ENCODE measurements at regions of chr15 and their contacts with region 1.

Region 1: DNA sequence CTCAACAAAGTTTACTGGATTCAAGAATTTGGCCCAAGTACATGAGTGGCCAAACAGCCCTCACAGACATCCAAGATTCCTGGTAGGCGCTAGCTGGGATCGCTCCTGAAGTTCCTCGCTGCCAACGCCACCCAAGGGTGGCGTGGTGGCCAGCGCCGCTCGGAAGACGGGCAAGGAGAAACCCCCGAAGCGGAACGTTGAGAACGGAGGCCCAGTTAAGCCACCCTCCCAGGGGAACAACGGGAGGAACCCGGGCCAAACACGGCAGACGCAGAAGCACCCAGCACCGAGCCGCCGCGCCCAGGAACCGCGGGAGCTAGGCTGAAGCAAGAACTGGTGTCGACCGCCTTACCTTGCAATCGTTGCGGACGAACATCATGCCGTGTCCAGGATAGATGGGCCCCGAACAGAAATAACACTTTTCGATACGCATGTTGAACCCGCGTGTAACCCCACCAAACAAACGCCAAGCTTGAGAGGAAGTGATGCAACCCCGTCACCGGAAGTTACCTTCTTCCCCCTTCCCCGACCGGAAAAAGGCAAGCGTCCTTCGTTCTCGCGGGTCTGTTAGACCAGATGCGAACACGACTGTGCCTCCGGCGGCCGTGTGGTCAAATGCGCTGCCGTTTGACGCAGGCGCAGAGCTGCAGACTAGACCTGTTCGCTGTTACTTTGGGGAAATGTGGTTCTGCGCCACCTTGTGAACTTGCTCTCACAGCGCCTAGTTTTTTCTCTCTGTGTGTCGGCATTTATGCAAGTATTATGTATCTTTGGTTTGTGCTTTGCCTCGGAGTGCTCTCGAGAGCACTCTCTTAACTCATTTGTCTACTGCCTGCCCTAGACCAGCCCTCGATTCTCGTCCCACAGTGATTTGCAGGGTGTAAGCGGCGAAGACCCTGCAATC is at the start of gene RSL24D1:
- DNase-seq: peak; percentile 94
- H3K4me3 Mint-ChIP-seq: no peak within 1 kb of the TSS
- H3K27ac Mint-ChIP-seq: no peak within 1 kb of the TSS
- H3K4me1 Mint-ChIP-seq: peaks cover under 1% of the 10 kb centered on the region
- H3K27me3 Mint-ChIP-seq: no peaks in the 10 kb centered on the region
- total RNA-seq, gene RSL24D1: 111 and 116 TPM in 2 replicates

Region 2: DNA sequence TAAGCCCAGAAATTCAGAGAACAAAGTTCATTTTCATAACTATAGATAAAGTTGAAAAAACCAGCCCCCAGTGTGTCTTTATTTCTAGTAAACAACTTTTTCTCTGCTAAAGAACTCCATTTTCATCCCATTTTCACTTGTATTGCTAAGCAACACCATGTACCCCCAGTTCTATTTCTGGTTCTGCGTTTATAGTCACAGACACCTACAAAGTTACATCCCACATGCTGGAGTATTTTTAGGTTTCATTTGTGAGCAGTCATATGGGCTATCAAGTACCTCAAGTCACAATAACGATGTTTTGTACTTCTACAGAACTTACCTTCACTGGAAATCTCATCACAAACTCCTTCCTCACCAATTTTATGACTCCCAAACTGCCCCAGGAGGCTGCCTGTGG is 236.4 kb before region 1 on chr15:
- intact Hi-C with region 1: no loop called
- DNase-seq: no peak
- H3K4me3 Mint-ChIP-seq: no peak overlapping the region
- H3K27ac Mint-ChIP-seq: no peak overlapping the region
- H3K4me1 Mint-ChIP-seq: no peaks in the 10 kb centered on the region
- H3K27me3 Mint-ChIP-seq: no peaks in the 10 kb centered on the region

Region 3: DNA sequence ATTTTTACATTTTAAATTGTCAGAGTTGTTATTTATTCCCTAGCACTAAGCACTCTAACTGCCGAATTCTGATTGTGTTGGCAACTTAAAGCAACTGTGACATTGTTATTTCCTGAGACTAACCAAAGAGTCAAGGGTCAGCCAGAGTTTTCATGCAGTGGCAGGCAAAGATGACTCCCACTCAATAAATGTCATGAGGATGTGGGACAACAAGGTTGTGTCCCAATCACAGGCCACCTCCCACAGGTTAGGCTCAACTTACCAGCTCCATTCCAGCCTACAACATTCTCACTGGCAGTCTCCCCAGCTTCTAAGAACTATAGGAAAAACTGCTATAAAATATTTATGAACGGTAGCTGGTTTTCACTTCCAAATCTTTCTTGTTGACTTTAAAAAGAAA is 80.1 kb before region 1 on chr15:
- intact Hi-C with region 1: no loop called
- DNase-seq: no peak
- H3K4me3 Mint-ChIP-seq: no peak overlapping the region
- H3K27ac Mint-ChIP-seq: no peak overlapping the region
- H3K4me1 Mint-ChIP-seq: no peaks in the 10 kb centered on the region
- H3K27me3 Mint-ChIP-seq: no peaks in the 10 kb centered on the region

Region 4: DNA sequence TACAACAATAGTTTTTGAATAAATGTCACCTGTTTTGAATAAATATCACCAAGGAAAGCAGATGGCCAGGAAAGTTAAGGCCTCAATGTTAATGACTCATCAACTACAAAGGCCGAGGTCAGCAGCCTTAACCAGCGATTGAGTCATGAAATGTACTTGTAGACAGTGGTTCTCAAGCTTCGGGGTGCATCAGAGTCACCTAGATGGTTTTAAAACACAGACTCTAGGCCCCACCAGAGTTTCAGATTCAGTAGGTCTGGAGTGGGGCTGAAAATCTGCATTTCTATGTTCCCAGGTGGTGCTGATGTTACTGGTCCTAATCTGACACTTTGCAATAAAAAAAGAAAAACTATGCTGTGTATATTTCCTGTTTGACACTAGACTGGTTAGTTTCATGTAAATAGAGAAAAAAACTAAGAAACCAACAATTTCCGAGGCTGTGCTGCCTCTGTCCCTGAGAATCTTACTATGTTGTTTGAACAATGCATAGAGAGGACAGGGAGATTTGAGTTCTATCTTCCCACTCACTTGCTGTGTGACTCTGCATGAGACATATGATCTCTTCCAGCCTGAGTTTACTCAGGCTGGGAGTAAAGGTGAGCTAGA is 83.1 kb after region 1 on chr15:
- intact Hi-C with region 1: loop called (anchors 1 kb)
- DNase-seq: peak; percentile 47
- H3K4me3 Mint-ChIP-seq: peak overlapping the region; percentile 57
- H3K27ac Mint-ChIP-seq: peak overlapping the region; percentile 99
- H3K4me1 Mint-ChIP-seq: peaks cover 92% of the 10 kb centered on the region
- H3K27me3 Mint-ChIP-seq: no peaks in the 10 kb centered on the region

Region 5: GRCh38 chr15:55318588-55319494 is 122.1 kb after region 1 on chr15 and contains the starts of genes PIGB and PIGBOS1:
- intact Hi-C with region 1: loop called (anchors 1 kb)
- DNase-seq: peak; percentile 78
- H3K4me3 Mint-ChIP-seq: peak within 1 kb of the TSS; percentile 100
- H3K27ac Mint-ChIP-seq: peak within 1 kb of the TSS; percentile 99
- H3K4me1 Mint-ChIP-seq: peaks cover 63% of the 10 kb centered on the region
- H3K27me3 Mint-ChIP-seq: no peaks in the 10 kb centered on the region
- total RNA-seq, gene PIGB: 14.0 and 19.9 TPM in 2 replicates
- total RNA-seq, gene PIGBOS1: 10.3 and 11.8 TPM in 2 replicates

Region 6: GRCh38 chr15:55434989-55435825 is 238.5 kb after region 1 on chr15:
- intact Hi-C with region 1: loop called (anchors 5 kb)
- DNase-seq: peak; percentile 1
- H3K4me3 Mint-ChIP-seq: no peak overlapping the region
- H3K27ac Mint-ChIP-seq: no peak overlapping the region
- H3K4me1 Mint-ChIP-seq: peaks cover 11% of the 10 kb centered on the region
- H3K27me3 Mint-ChIP-seq: peaks cover 4% of the 10 kb centered on the region

Region 7: DNA sequence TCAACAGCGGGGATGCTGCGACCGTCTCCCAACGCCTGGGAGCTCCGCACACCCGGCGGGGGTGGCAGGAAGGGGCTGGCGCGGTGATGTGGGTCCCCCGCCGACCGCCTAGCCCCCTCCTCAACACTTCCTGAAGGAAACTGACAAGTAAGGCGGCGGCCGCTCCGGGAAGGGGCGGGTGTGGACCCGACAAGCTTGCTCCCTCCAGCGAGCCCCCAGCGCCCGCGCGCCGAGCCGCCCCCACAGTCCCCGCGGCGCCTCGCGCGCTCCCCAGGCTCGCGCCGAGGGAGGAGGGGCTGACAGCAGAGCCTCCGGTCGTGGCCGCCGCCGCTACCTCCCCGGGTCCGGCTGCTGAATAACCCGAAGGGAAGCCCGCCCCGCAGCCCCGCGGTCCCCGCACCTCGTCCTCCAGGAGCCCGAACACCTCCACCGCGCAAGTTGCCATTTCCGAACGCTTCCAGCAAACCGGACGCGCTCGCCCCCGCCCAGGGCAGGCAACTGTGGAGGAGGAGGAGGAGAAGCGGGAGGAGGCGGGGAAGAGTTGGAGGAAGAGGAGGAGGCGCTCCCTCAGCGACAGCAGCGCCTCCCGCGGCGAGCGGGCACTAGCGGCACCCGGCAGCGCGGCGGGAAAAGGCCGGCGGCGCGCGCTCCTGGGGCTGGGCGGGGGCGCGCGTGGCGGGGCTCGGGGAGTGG is 796.5 kb after region 1 on chr15 and contains the start of gene NEDD4:
- intact Hi-C with region 1: loop called (anchors 10 kb)
- DNase-seq: peak; percentile 68
- H3K4me3 Mint-ChIP-seq: peak within 1 kb of the TSS; percentile 87
- H3K27ac Mint-ChIP-seq: peak within 1 kb of the TSS; percentile 57
- H3K4me1 Mint-ChIP-seq: peaks cover 23% of the 10 kb centered on the region
- H3K27me3 Mint-ChIP-seq: peaks cover 30% of the 10 kb centered on the region
- total RNA-seq, gene NEDD4: 10.4 and 12.6 TPM in 2 replicates